ENCODE measurements at regions of chr11 and their contacts with region 1.

Region 1: GRCh38 chr11:13885083-13885482 is 77.4 kb upstream of the SPON1 start:
- H3K4me3 ChIP-seq: no peak overlapping the region
- H3K27ac ChIP-seq: no peak overlapping the region
- H3K4me1 ChIP-seq: no peaks in the 10 kb centered on the region
- CTCF ChIP-seq: no peak

Region 2: GRCh38 chr11:13874597-13874996 is 10.5 kb before region 1 on chr11:
- CTCF ChIA-PET with region 1: interaction called, 11 read pairs
- POLR2A ChIA-PET with region 1: no interaction called
- H3K4me3 ChIP-seq: no peak overlapping the region
- H3K27ac ChIP-seq: no peak overlapping the region
- H3K4me1 ChIP-seq: no peaks in the 10 kb centered on the region
- CTCF ChIP-seq: no peak

Region 3: DNA sequence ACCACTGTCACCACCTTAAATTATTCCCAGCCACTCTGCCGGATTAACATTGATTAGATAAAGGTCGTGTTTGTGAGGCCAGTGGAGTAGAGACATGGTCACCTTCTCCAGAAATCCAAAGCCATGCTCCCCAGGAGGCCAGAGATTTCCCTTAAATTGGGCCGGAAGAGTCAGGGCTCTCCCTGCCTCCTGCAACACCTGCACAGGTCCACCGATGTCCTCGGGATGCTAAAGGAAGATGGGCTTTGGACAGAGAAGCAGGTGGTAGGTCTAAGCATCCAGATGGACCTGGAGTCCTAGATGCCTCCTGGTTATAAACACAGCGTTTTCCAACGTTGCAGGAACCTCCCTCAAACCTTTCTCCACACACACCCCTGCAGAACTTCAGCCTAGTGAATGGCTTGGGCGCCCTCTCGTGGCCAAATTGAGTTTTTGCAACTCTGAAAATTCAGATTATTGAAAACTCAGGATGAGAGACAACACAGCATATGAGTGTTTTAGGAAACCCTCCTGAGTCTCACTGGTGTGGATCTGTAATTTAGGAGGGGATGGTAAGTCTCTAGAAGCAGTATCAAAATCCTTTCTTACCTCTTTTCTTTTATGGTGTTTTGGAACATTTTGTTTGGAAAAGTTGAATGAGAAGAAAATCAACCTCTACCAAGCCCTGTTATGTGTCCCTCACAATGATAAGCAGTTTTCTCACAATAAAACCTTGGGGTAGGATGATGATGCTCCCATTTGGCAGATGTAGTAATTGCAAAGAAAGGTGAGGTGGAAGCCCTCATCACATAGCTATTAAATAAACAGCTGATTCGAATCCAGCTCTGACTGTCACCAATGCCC is 364.3 kb after region 1 on chr11:
- CTCF ChIA-PET with region 1: no interaction called
- POLR2A ChIA-PET with region 1: no interaction called
- H3K4me3 ChIP-seq: no peak overlapping the region
- H3K27ac ChIP-seq: no peak overlapping the region
- H3K4me1 ChIP-seq: no peaks in the 10 kb centered on the region
- CTCF ChIP-seq: peak; percentile 44; the same call in 1 of the 2 replicates